B cell (primary cell): ENCODE measurements at regions of chr19 and their contacts with region 1.

Region 1: DNA sequence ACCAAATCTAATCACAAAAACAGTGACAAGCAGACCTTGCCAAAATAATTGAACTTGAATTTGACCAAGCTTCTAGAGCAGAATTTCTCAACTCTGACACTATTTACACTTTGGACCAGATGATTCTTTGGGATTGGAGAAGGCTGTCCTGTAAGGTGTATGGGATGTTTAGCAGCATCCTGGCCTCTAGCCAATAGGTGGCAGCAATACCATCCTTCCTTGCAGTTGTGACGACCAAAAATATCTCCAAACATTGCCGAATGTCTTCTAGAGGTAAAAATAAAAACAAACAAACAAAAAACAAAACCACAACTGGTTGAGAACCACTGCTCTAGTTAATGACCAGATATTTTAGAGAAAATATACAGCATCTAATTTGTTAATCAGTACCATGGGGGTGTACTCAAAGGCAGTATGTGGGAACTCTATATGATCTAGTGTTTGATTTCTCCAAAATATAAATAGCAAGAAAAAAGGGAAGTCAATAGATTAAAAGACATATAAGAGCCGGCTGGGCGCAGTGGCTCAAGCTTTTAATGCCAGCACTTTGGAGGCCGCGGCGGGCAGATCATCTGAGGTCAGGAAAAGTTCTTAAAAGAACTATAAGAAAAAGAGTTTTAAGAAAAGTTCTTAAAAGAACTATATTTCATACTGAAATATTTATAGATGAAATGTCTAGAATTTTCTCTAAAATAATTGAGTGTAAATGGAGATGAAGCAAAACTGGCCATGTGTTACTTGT is 60.9 kb upstream of the ZNF527 start:
- DNase-seq: peak; percentile 57
- ATAC-seq: no peak
- H3K4me3 ChIP-seq: no peak overlapping the region
- H3K4me3 Mint-ChIP-seq: no peak overlapping the region
- H3K27ac ChIP-seq: no peak overlapping the region
- H3K27ac Mint-ChIP-seq: no peak overlapping the region
- H3K4me1 ChIP-seq: peaks cover 5 to 11% of the 10 kb centered on the region in 2 donors
- H3K4me1 Mint-ChIP-seq: peaks cover 19% of the 10 kb centered on the region
- H3K27me3 ChIP-seq: peaks cover 0 to 3% (median 1%) of the 10 kb centered on the region in 4 experiments
- H3K27me3 Mint-ChIP-seq: peaks cover 5% of the 10 kb centered on the region
- CTCF ChIP-seq: peak; percentile 64

Region 2: GRCh38 chr19:37551129-37551993 is 241.4 kb after region 1 on chr19:
- CTCF ChIA-PET with region 1: interaction called, 11 read pairs
- POLR2A ChIA-PET with region 1: no interaction called
- intact Hi-C with region 1: loop called (anchors 10 kb)
- DNase-seq: peak; percentile 81
- ATAC-seq: peak; percentile 78
- H3K4me3 ChIP-seq: peak overlapping the region; percentile 50 to 72 (median 64)
- H3K4me3 Mint-ChIP-seq: peak overlapping the region; percentile 89
- H3K27ac ChIP-seq: peak overlapping the region; percentile 65 to 86
- H3K27ac Mint-ChIP-seq: peak overlapping the region; percentile 85
- H3K4me1 ChIP-seq: peaks cover 0 to 7% of the 10 kb centered on the region in 2 donors
- H3K4me1 Mint-ChIP-seq: peaks cover 6% of the 10 kb centered on the region
- H3K27me3 ChIP-seq: no peaks in the 10 kb centered on the region
- H3K27me3 Mint-ChIP-seq: no peaks in the 10 kb centered on the region
- CTCF ChIP-seq: peak; percentile 62

Region 3: DNA sequence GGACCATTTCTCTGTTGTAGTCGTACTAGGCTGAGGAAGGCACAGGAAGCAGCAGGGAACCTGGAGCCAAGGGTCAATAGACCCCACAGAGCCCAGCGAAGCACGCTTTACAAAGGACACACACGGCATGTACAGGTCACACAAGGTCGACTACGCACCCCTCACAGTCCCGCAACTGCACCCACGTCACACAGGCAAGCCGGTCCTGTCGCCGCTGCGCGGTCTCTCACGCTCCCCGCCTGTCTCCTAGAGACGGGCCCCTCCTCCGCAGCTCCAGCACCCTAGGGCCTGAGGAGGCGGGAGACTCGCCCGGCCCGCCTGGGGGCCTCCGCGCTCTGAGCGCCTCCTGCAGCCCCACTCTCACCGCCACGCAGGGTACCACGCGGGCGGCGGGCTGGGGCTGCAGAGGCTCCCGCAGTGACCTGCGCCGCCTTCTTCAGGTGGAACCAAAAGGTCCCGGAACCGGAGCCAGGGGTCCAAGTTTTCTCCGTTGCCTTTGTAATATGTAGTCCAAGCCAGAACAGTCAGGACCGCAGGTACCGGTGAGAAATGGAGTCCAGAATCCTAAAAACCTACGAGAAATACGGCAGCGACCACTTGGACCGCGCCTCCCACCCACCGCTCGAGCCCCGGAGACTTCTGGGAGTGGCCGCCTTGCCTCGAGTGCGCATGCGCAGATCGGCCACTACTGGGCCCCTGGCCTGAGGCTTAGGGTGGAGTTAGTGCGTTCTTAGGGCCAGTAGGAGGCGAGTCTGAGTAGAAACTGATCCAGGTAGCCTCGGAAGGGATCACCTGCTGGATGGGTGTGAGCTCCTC is 409.3 kb after region 1 on chr19 and contains the start of gene ZNF607:
- CTCF ChIA-PET with region 1: no interaction called
- POLR2A ChIA-PET with region 1: no interaction called
- intact Hi-C with region 1: loop called (anchors 10 kb)
- DNase-seq: peak; percentile 94
- ATAC-seq: peak; percentile 95
- H3K4me3 ChIP-seq: peak within 1 kb of the TSS; percentile 51 to 86 (median 82)
- H3K4me3 Mint-ChIP-seq: peak within 1 kb of the TSS; percentile 90
- H3K27ac ChIP-seq: peak within 1 kb of the TSS; percentile 62 to 68
- H3K27ac Mint-ChIP-seq: peak within 1 kb of the TSS; percentile 89
- H3K4me1 ChIP-seq: peaks cover 7 to 12% of the 10 kb centered on the region in 2 donors
- H3K4me1 Mint-ChIP-seq: peaks cover 14% of the 10 kb centered on the region
- H3K27me3 ChIP-seq: no peaks in the 10 kb centered on the region
- H3K27me3 Mint-ChIP-seq: no peaks in the 10 kb centered on the region
- CTCF ChIP-seq: peak; percentile 52
- total RNA-seq, gene ZNF607: 19.4 and 21.5 TPM in 2 replicates